ENCODE measurements at regions of chr11 and their contacts with region 1.

Region 1: DNA sequence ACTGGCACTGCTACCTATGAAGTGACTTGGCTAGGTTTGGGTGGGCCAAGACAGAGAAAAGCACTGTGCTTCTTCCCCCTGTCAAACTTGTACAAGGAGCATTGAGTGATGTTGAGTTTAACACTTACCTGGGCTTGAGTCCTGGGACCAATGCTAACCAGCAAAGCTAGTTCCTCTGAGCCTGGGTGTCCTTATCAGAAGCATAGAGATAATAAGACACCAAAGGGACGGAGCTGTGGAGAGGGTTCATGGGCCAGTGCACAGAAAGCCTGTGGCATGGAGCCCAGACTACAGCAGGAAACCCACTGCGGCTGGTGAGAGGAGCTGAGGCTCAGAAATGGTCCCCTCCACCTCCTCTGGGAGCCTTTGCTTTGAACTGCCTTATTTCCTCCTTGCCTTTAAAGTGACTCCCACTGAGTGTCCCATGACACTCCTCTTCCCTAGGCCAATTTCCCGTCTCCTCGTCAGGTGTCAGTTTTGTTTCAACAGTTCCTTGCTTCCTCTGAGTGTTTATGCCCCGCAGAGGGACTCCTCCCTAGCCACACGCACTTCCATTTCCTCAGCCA is 9.4 kb downstream of the SLCO2B1 start:
- DNase-seq: no peak
- ATAC-seq: no peak
- H3K4me3 ChIP-seq: peak overlapping the region; percentile 9 to 61 (median 15); a peak in 4 of 6 replicates
- H3K27ac ChIP-seq: peak overlapping the region; percentile 89
- H3K4me1 ChIP-seq: peaks cover 100% of the 10 kb centered on the region
- H3K27me3 ChIP-seq: no peaks in the 10 kb centered on the region
- CTCF ChIP-seq: no peak
- EP300 ChIP-seq: no peak
- POLR2A ChIP-seq: no peak
- RAD21 ChIP-seq: no peak

Region 2: GRCh38 chr11:75147875-75148263 is 12.4 kb before region 1 on chr11:
- CTCF ChIA-PET with region 1: interaction called, 3 read pairs
- POLR2A ChIA-PET with region 1: interaction called, 72 read pairs
- in situ Hi-C with region 1: no loop called
- intact Hi-C with region 1: no loop called
- DNase-seq: no peak
- ATAC-seq: no peak
- H3K4me3 ChIP-seq: no peak overlapping the region
- H3K27ac ChIP-seq: no peak overlapping the region
- H3K4me1 ChIP-seq: peaks cover 99% of the 10 kb centered on the region
- H3K27me3 ChIP-seq: no peaks in the 10 kb centered on the region
- CTCF ChIP-seq: no peak
- EP300 ChIP-seq: no peak
- POLR2A ChIP-seq: no peak
- RAD21 ChIP-seq: no peak

Region 3: DNA sequence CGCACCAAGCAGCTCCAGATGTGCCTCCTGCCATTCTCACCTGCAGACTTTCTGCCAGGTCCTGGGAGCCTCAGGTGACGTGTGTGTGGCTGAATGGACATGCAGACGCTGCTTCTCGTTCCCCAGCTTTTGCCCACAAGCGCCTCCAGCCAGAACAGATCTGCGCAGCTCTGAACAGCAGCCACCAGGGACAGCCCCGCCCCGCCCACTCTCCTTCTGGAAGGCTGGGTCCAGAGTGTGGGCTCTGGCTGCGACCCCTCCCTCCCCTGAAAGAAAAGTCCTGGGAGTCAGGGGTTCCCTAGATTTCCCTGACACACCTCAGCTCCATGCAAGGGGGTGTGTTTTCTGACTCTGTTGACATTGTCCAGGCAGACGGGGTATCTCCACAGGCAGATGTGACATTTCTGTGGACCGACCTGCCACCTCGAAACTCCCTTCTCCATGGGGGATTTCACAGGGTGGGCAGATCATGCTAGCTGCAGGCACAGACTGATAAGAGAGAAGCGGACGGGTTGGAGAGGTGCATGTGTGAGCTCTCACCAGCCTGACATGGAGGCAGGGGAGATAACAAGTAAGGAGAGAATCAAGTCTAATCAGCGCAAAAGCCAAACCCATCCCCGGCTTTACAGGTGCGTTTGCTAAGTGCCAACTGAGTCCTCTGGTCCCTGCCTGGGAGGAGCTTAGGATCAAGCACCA is 10.4 kb after region 1 on chr11:
- CTCF ChIA-PET with region 1: interaction called, 3 read pairs
- POLR2A ChIA-PET with region 1: interaction called, 174 read pairs
- in situ Hi-C with region 1: no loop called
- intact Hi-C with region 1: loop called (anchors 1 kb)
- DNase-seq: no peak
- ATAC-seq: no peak
- H3K4me3 ChIP-seq: no peak overlapping the region
- H3K27ac ChIP-seq: peak overlapping the region; percentile 95
- H3K4me1 ChIP-seq: peaks cover 81% of the 10 kb centered on the region
- H3K27me3 ChIP-seq: no peaks in the 10 kb centered on the region
- CTCF ChIP-seq: no peak
- EP300 ChIP-seq: no peak
- POLR2A ChIP-seq: no peak
- RAD21 ChIP-seq: no peak

Measured in HepG2 (cell line).